Activated CD4-positive, alpha-beta memory T cell treated with anti-CD3 and anti-CD28 coated beads for 36 hours (primary cell): ENCODE measurements at regions of chr5 and their contacts with region 1.

Region 1: GRCh38 chr5:80871541-80871961 is 88.6 kb upstream of the RASGRF2 start:
- DNase-seq: peak; percentile 75
- H3K4me3 Mint-ChIP-seq: no peak overlapping the region
- H3K27ac Mint-ChIP-seq: peak overlapping the region; percentile 79
- H3K4me1 Mint-ChIP-seq: peaks cover 31% of the 10 kb centered on the region
- H3K27me3 Mint-ChIP-seq: no peaks in the 10 kb centered on the region

Region 2: DNA sequence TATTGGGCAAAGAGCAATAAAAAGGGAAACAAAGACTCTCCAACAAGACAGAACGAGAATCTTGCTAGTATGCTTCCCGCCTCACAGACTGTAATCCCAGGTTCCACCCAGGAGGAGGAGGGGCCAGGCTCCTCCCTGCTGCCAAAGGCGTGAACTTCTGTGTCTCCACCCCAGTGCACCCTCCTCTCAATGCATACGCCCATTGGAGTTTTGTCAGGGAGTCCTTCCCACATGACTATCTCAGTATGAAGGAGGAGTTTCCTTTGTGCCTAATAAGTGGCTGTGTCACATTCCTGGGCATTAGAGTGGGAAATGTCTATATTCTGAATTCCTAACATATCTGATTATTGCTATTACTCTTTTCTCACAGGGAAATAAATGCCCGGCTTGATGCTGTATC is 110.4 kb before region 1 on chr5:
- CTCF ChIA-PET with region 1: no interaction called
- POLR2A ChIA-PET with region 1: no interaction called
- intact Hi-C with region 1: loop called (anchors 2 kb)
- DNase-seq: no peak
- H3K4me3 Mint-ChIP-seq: no peak overlapping the region
- H3K27ac Mint-ChIP-seq: peak overlapping the region; percentile 7
- H3K4me1 Mint-ChIP-seq: peaks cover 53% of the 10 kb centered on the region
- H3K27me3 Mint-ChIP-seq: no peaks in the 10 kb centered on the region

Region 3: DNA sequence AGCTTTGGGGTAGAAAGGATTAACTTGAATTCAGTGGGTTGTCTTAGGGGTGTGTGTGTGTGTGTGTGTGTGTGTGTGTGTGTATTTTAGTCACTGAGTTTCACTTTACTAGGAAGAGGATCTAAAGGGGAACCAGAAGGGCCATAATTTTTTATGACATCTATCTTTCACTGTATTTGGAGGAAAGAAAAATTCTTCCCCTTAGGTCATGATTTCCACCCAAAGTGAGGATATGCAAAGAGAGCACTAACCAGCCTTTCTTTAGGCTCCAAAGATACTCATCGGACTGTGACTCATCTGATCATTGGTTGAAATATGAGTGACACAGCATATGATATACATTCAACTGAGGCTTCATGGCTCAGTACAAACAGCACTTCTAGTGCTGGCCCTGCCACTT is 13.4 kb after region 1 on chr5:
- CTCF ChIA-PET with region 1: no interaction called
- POLR2A ChIA-PET with region 1: interaction called, 3 read pairs
- intact Hi-C with region 1: loop called (anchors 1 kb)
- DNase-seq: peak; percentile 12
- H3K4me3 Mint-ChIP-seq: no peak overlapping the region
- H3K27ac Mint-ChIP-seq: peak overlapping the region; percentile 65
- H3K4me1 Mint-ChIP-seq: peaks cover 21% of the 10 kb centered on the region
- H3K27me3 Mint-ChIP-seq: no peaks in the 10 kb centered on the region

Region 4: GRCh38 chr5:81151546-81151945 is 280.0 kb after region 1 on chr5:
- CTCF ChIA-PET with region 1: no interaction called
- POLR2A ChIA-PET with region 1: no interaction called
- intact Hi-C with region 1: no loop called
- DNase-seq: no peak
- H3K4me3 Mint-ChIP-seq: no peak overlapping the region
- H3K27ac Mint-ChIP-seq: no peak overlapping the region
- H3K4me1 Mint-ChIP-seq: no peaks in the 10 kb centered on the region
- H3K27me3 Mint-ChIP-seq: no peaks in the 10 kb centered on the region